Dorsolateral prefrontal cortex (tissue), 120 donors: ENCODE measurements at regions of chr5 and their contacts with region 1.

Region 1: GRCh38 chr5:61401726-61402125 is 69.7 kb downstream of the ZSWIM6 start:
- DNase-seq: no peak
- H3K4me3 ChIP-seq: no peak overlapping the region
- H3K27ac ChIP-seq: peak overlapping the region in 4 of 59 donors; percentile 3 to 40 (median 10)
- H3K27me3 ChIP-seq: no peaks in the 10 kb centered on the region
- CTCF ChIP-seq: no peak

Region 2: GRCh38 chr5:61347080-61347479 is 54.6 kb before region 1 on chr5:
- intact Hi-C with region 1: loop called in 1 of 2 experiments (anchors 5 kb)
- DNase-seq: no peak
- H3K4me3 ChIP-seq: no peak overlapping the region
- H3K27ac ChIP-seq: peak overlapping the region in 1 of 59 donors; percentile 3
- H3K27me3 ChIP-seq: no peaks in the 10 kb centered on the region
- CTCF ChIP-seq: peak in 1 of 56 donors; percentile 7